GM12878 (cell line): ENCODE measurements at regions of chr10 and their contacts with region 1.

Region 1: DNA sequence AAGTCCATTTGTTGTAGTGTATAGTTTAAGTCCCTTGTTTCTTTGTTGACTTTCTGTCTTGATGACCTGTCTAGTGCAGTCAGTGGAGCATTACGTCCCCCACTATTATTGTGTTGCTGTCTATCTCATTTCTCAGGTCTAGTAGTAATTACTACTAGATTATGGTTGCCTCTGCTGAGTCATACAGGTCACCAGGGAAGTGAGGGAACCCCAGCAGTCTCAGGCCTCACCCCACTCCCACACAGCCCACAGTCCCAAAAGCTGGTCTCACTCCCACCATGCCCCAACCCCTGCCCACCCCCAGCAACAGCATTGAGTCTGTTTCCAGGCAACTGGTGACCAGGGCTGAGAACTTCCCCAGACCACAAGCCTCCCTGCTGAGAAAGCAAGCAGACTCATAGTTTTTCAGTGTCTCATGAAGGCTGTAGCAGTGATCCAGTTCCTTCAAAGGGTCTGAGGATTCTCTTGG is 88.0 kb downstream of the PLXDC2 start:
- DNase-seq: peak; percentile 27
- ATAC-seq: peak; percentile 98
- H3K4me3 ChIP-seq: no peak overlapping the region
- H3K27ac ChIP-seq: no peak overlapping the region
- H3K4me1 ChIP-seq: no peaks in the 10 kb centered on the region
- H3K27me3 ChIP-seq: no peaks in the 10 kb centered on the region
- CTCF ChIP-seq: no peak
- EP300 ChIP-seq: peak; percentile 9 to 59; a peak in 2 of 4 replicates
- POLR2A ChIP-seq: no peak
- RAD21 ChIP-seq: no peak

Region 2: DNA sequence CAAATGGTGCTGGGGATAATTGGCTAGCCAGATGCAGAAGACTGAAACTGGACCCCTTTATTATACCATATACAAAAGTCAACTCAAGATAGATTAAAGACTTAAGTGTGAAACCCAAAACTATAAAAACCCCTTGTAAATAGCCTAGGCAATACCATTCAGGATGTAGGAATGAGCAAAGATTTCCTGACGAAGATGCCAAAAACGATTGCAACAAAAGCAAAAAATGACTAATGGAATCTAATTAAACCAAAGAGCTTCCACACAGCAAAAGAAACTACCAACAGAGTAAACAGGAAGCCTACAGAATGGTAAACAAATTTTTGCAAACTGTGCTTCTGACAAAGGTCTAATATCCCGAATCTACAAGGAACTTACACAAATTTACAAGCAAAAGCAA is 118.9 kb before region 1 on chr10:
- CTCF ChIA-PET with region 1: no interaction called
- POLR2A ChIA-PET with region 1: no interaction called
- RAD21 ChIA-PET with region 1: no interaction called
- SMC1A ChIA-PET with region 1: no interaction called
- in situ Hi-C with region 1: no loop called
- intact Hi-C with region 1: no loop called
- DNase-seq: no peak
- ATAC-seq: no peak
- H3K4me3 ChIP-seq: no peak overlapping the region
- H3K27ac ChIP-seq: no peak overlapping the region
- H3K4me1 ChIP-seq: no peaks in the 10 kb centered on the region
- H3K27me3 ChIP-seq: no peaks in the 10 kb centered on the region
- CTCF ChIP-seq: no peak
- EP300 ChIP-seq: no peak
- POLR2A ChIP-seq: no peak
- RAD21 ChIP-seq: no peak

Region 3: GRCh38 chr10:19819419-19820033 is 84.7 kb before region 1 on chr10:
- CTCF ChIA-PET with region 1: no interaction called
- POLR2A ChIA-PET with region 1: no interaction called
- RAD21 ChIA-PET with region 1: no interaction called
- SMC1A ChIA-PET with region 1: no interaction called
- in situ Hi-C with region 1: no loop called
- intact Hi-C with region 1: loop called (anchors 5 kb)
- DNase-seq: no peak
- ATAC-seq: peak; percentile 10; the same call in 1 of the 3 replicates
- H3K4me3 ChIP-seq: no peak overlapping the region
- H3K27ac ChIP-seq: no peak overlapping the region
- H3K4me1 ChIP-seq: no peaks in the 10 kb centered on the region
- H3K27me3 ChIP-seq: peaks cover 1 to 3% of the 10 kb centered on the region in 2 experiments; a peak in 3 of 4 replicates
- CTCF ChIP-seq: peak; percentile 46 to 72 (median 55); a peak in 5 of 6 replicates
- EP300 ChIP-seq: no peak
- POLR2A ChIP-seq: no peak
- RAD21 ChIP-seq: peak; percentile 62

Region 4: DNA sequence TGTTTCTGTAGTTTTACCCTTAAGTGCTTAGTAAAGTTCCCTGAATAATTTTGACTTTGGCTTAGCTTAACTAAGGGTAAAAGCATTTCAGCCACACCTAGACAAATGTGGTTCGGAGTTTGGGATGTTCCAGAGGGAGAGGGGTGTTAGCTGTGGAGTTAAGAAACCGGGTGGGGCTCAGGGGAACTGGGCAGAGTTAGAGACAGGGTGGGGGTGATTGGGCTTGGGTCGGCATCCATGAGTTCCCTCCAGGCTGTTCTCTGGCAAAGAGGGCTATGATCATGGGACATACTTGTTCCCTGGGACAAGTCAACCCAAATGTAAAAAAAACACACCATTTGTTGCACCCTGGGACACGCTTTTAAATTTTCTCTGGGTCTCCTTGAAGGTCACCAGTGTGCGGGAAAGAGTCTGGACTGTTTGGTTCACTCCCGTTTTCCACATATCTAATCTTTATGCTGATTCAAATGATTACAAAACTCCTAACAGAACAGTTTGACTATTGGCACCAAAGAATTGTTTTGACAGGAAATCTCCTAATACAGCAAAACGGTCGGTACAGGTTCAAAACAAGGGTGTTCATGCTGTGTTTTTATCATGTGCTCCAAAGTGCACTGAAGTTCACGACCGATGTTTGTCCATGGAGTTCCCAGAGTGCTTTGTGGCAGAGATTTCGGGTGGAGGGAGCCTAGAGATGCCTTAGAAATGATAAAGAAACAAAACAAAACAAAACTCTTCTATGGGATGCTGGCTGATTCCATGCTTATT is 31.5 kb before region 1 on chr10:
- CTCF ChIA-PET with region 1: no interaction called
- POLR2A ChIA-PET with region 1: no interaction called
- RAD21 ChIA-PET with region 1: no interaction called
- SMC1A ChIA-PET with region 1: no interaction called
- in situ Hi-C with region 1: no loop called
- intact Hi-C with region 1: no loop called
- DNase-seq: no peak
- ATAC-seq: no peak
- H3K4me3 ChIP-seq: no peak overlapping the region
- H3K27ac ChIP-seq: no peak overlapping the region
- H3K4me1 ChIP-seq: no peaks in the 10 kb centered on the region
- H3K27me3 ChIP-seq: no peaks in the 10 kb centered on the region
- CTCF ChIP-seq: no peak
- EP300 ChIP-seq: no peak
- POLR2A ChIP-seq: no peak
- RAD21 ChIP-seq: no peak

Region 5: DNA sequence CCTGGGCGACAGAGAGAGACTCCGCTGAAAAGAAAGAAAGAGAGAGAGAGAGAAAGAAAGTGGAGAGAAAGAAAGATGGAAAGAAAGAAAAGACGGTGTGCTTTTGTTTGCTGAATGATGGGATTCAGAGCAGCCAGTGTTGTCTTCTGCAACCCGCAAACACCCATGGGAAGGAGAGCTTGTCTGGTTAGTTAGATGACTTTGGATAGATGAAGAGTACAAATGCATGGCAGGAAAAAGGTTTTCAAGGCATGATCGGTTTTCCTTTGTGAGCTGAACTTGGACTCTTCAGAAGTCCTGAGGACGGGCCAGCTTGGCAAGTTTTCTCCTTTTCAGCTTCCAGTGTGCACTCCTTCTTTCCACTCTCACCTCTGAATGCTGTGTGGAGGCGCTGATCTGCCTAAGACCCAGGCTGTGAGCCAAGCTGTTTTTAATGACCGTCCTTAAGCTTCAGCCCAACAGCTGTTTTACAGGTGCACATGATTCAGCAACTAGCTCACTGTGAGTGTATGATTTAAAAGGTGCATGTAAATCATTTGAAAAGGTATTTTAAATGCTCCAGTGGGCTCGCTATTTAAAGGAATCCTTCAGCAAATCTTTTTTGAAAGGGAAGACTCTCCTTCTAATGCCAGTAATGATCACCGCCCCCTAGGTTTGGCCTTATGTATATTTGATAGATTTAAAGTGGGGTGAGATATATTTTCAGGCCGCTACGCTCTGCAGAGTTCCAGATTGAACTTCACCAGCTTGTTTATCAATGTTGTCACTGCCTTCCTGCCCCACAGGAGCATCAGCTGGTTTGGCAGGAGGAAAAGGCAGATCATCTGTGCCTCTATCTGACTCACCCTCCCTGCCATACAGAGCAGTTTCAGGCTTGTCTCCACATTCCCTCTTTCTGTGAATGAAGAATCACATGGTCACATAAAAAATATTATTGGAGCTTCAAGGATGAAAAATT is 27.0 kb after region 1 on chr10:
- CTCF ChIA-PET with region 1: no interaction called
- POLR2A ChIA-PET with region 1: no interaction called
- RAD21 ChIA-PET with region 1: no interaction called
- SMC1A ChIA-PET with region 1: interaction called, 11 read pairs
- in situ Hi-C with region 1: no loop called
- intact Hi-C with region 1: no loop called
- DNase-seq: no peak
- ATAC-seq: peak; percentile 63
- H3K4me3 ChIP-seq: no peak overlapping the region
- H3K27ac ChIP-seq: no peak overlapping the region
- H3K4me1 ChIP-seq: no peaks in the 10 kb centered on the region
- H3K27me3 ChIP-seq: no peaks in the 10 kb centered on the region
- CTCF ChIP-seq: no peak
- EP300 ChIP-seq: no peak
- POLR2A ChIP-seq: no peak
- RAD21 ChIP-seq: no peak

Region 6: DNA sequence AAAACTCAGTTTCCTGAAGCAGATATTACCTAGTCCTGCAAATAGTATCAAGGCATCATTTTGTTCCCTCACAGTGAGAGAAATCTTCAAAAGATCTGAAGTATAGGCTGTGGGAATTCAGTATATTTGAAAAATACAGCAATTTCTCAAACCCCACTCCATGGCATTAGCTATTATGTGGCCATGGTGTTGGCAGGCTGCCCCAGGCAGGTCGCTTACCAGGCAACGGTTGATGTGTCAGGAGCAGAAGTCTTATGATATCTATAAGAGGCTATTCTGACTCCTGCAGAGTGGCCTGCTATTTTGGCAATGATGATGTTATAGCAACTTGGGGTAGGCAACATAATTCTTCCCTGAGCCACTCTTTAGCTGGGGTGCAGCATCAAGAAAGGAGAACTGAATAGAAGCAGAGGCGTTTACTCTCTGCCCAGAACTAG is 99.9 kb after region 1 on chr10:
- CTCF ChIA-PET with region 1: no interaction called
- POLR2A ChIA-PET with region 1: no interaction called
- RAD21 ChIA-PET with region 1: interaction called, 4 read pairs
- SMC1A ChIA-PET with region 1: interaction called, 3 read pairs
- in situ Hi-C with region 1: no loop called
- intact Hi-C with region 1: loop called (anchors 5 kb)
- DNase-seq: peak; percentile 28
- ATAC-seq: peak; percentile 85
- H3K4me3 ChIP-seq: no peak overlapping the region
- H3K27ac ChIP-seq: peak overlapping the region; percentile 75
- H3K4me1 ChIP-seq: peaks cover 10% of the 10 kb centered on the region
- H3K27me3 ChIP-seq: no peaks in the 10 kb centered on the region
- CTCF ChIP-seq: no peak
- EP300 ChIP-seq: no peak
- POLR2A ChIP-seq: no peak
- RAD21 ChIP-seq: no peak